SK-N-SH (cell line): ENCODE measurements at regions of chr12 and their contacts with region 1.

Region 1: DNA sequence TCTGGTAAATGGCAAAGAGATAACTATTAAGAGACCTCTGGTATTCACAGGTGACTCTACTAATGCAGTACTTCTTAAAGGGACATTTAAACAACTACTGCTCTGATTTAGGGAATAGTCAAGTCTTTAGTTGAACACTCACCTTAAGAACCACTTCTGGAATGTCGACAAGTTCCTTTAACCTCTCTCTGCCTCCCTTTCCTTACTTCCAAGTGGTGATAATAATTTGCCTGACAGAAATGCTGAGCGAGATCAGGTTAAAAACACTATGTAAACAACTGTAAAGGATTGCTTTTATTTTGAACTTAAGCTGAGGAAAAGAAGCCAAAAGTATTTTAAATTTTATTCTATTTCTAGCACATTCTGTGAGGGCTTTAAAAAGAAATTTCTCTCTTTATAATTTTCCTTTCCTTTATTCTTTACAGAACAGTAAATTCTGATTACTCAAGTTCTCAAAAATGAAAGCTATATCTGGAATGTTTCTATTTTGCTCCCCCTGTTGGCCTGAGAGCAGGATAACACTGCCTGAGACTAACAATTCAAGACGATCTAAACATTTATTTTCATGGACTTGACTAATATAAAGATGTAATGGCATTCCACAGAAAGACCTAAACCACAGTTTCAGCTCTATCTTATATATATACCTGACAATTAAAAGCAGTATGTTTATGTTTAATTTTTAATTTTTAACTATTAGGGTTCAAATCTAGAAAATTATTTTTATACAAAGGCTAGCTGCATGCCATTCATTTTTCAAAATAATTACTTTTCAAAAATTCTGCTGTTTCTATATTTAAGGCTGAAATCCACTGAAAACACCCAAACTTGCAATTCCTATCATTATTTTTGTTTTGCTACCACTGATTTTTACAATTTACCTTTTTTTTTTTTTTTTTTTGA is 29.2 kb downstream of the ZCCHC8 start:
- DNase-seq: peak; percentile 58
- H3K4me3 ChIP-seq: no peak overlapping the region; a peak in 1 of 4 replicates
- H3K27ac ChIP-seq: peak overlapping the region; percentile 44 to 71
- H3K4me1 ChIP-seq: peaks cover 0 to 4% of the 10 kb centered on the region in 2 experiments; a peak in 1 of 4 replicates
- H3K27me3 ChIP-seq: no peaks in the 10 kb centered on the region
- CTCF ChIP-seq: peak; percentile 90
- EP300 ChIP-seq: no peak
- RAD21 ChIP-seq: peak; percentile 75

Region 2: GRCh38 chr12:122382919-122383350 is 88.6 kb before region 1 on chr12:
- CTCF ChIA-PET with region 1: no interaction called
- POLR2A ChIA-PET with region 1: no interaction called
- DNase-seq: no peak
- H3K4me3 ChIP-seq: no peak overlapping the region
- H3K27ac ChIP-seq: no peak overlapping the region
- H3K4me1 ChIP-seq: peaks cover 0 to 2% of the 10 kb centered on the region in 2 experiments; a peak in 1 of 4 replicates
- H3K27me3 ChIP-seq: no peaks in the 10 kb centered on the region
- CTCF ChIP-seq: no peak
- EP300 ChIP-seq: no peak
- RAD21 ChIP-seq: no peak

Region 3: GRCh38 chr12:122399592-122400373 is 71.8 kb before region 1 on chr12:
- CTCF ChIA-PET with region 1: interaction called, 148 read pairs
- POLR2A ChIA-PET with region 1: interaction called, 3 read pairs
- DNase-seq: peak; percentile 66
- H3K4me3 ChIP-seq: peak overlapping the region in 1 of 2 experiments; percentile 42; a peak in 2 of 4 replicates
- H3K27ac ChIP-seq: peak overlapping the region; percentile 77 to 99
- H3K4me1 ChIP-seq: peaks cover 10 to 23% of the 10 kb centered on the region in 2 experiments
- H3K27me3 ChIP-seq: no peaks in the 10 kb centered on the region
- CTCF ChIP-seq: peak; percentile 79
- EP300 ChIP-seq: no peak
- RAD21 ChIP-seq: peak; percentile 89

Region 4: GRCh38 chr12:122449353-122449752 is 22.2 kb before region 1 on chr12:
- CTCF ChIA-PET with region 1: interaction called, 12 read pairs
- POLR2A ChIA-PET with region 1: no interaction called
- DNase-seq: no peak
- H3K4me3 ChIP-seq: no peak overlapping the region
- H3K27ac ChIP-seq: no peak overlapping the region; a peak in 1 of 4 replicates
- H3K4me1 ChIP-seq: no peaks in the 10 kb centered on the region
- H3K27me3 ChIP-seq: no peaks in the 10 kb centered on the region
- CTCF ChIP-seq: no peak
- EP300 ChIP-seq: no peak
- RAD21 ChIP-seq: no peak

Region 5: GRCh38 chr12:122481861-122482260 is 10.3 kb after region 1 on chr12:
- CTCF ChIA-PET with region 1: interaction called, 21 read pairs
- POLR2A ChIA-PET with region 1: no interaction called
- DNase-seq: no peak
- H3K4me3 ChIP-seq: no peak overlapping the region
- H3K27ac ChIP-seq: peak overlapping the region in 1 of 2 experiments; percentile 39; a peak in 2 of 4 replicates
- H3K4me1 ChIP-seq: 0 out of 4 replicates have a peak, but pooled peaks cover 0 to 3% of the 10 kb centered on the region in 2 experiments
- H3K27me3 ChIP-seq: no peaks in the 10 kb centered on the region
- CTCF ChIP-seq: no peak
- EP300 ChIP-seq: no peak
- RAD21 ChIP-seq: no peak

Region 6: DNA sequence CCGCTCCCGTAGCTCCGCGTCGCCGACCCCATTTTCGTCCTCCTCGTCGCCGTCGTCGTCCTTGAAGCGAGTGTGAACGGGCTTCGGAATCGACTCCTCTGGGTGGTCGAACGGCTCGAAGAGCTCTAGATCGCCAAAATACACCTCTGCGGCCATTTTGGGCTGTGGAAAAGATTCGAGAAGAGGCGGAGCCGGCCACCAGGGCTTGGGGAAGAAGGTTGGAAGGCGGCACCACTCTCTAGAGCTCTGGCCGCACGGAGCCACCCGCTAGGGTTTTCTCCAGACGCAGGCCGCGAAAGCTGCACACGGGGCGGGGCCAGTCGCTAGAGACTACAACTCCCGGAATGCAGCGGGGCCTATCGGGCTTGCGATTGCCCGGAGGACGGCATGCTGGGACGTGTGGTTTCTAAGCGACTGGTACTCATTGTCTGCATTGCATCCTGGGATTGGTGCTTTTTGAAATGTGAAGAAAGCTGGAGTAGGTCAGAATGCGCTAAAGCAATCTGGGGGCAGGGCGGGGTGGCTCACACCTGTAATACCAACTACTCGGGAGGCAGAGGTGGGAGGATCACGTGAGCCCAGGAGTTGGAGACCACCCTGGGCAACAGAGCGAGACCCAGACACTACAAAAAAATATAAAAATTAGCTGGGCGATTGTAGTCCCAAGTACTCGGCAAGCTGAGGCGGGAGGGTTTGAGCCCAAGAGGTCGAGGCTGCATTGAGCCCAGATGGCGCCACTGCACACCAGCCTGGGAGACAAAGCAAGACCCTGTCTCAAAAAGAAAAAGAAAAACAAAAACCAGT is 29.3 kb after region 1 on chr12 and contains the start of gene ZCCHC8:
- CTCF ChIA-PET with region 1: interaction called, 40 read pairs
- POLR2A ChIA-PET with region 1: interaction called, 3 read pairs
- DNase-seq: peak; percentile 92
- H3K4me3 ChIP-seq: peak within 1 kb of the TSS; percentile 63 to 88
- H3K27ac ChIP-seq: peak within 1 kb of the TSS; percentile 92 to 99
- H3K4me1 ChIP-seq: peaks cover 0 to 11% of the 10 kb centered on the region in 2 experiments; a peak in 2 of 4 replicates
- H3K27me3 ChIP-seq: no peaks in the 10 kb centered on the region
- CTCF ChIP-seq: no peak; the same call in 1 of the 2 replicates
- EP300 ChIP-seq: 0 out of 4 replicates have a peak, but pooled peaks of 1 of the 2 experiments have one; percentile 18
- RAD21 ChIP-seq: no peak
- polyA plus RNA-seq, gene ZCCHC8: 11.3 and 14.0 TPM in 2 replicates

Region 7: GRCh38 chr12:122517877-122518276 is 46.3 kb after region 1 on chr12:
- CTCF ChIA-PET with region 1: no interaction called
- POLR2A ChIA-PET with region 1: no interaction called
- DNase-seq: no peak
- H3K4me3 ChIP-seq: no peak overlapping the region
- H3K27ac ChIP-seq: peak overlapping the region in 1 of 2 experiments; percentile 44; a peak in 2 of 4 replicates
- H3K4me1 ChIP-seq: peaks cover 0 to 5% of the 10 kb centered on the region in 2 experiments; a peak in 2 of 4 replicates
- H3K27me3 ChIP-seq: no peaks in the 10 kb centered on the region
- CTCF ChIP-seq: no peak
- EP300 ChIP-seq: no peak
- RAD21 ChIP-seq: no peak

Region 8: DNA sequence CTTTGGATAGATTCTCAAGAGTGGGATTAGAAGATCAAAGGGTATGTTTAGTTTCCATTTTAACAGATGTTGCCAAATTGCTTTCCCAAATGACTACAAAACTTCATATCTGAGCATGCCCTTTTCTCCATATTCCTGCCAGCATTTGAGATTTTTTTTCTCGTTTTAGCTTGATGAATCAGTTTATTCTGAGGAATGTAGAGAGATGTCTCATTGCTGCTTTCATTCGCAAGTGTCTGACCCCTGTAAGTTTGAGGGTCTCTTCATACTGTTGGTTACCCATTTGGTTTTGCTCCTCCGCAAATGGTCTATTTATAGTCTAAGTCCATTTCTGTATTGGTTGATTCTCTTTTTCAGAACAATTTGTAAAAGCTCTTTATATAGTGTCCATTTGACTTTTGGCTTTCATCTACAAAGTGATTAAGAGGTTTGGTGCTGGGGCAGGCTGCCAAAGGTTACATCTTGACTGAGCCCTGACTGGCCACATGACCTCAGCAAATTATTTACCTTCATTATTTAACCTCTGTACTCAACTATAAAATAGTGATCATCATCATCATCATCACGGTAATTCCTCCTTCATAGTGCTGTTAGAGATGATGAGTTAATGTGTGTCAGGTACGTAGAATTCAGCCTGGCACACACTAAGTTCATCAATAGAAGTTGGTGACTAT is 198.0 kb after region 1 on chr12:
- CTCF ChIA-PET with region 1: no interaction called
- POLR2A ChIA-PET with region 1: no interaction called
- DNase-seq: no peak
- H3K4me3 ChIP-seq: no peak overlapping the region
- H3K27ac ChIP-seq: peak overlapping the region in 1 of 2 experiments; percentile 71; a peak in 2 of 4 replicates
- H3K4me1 ChIP-seq: peaks cover 0 to 5% of the 10 kb centered on the region in 2 experiments; a peak in 1 of 4 replicates
- H3K27me3 ChIP-seq: no peaks in the 10 kb centered on the region
- CTCF ChIP-seq: no peak
- EP300 ChIP-seq: no peak
- RAD21 ChIP-seq: no peak

Region 9: GRCh38 chr12:122974274-122974891 is 502.8 kb after region 1 on chr12:
- CTCF ChIA-PET with region 1: no interaction called
- POLR2A ChIA-PET with region 1: no interaction called
- DNase-seq: peak; percentile 93
- H3K4me3 ChIP-seq: peak overlapping the region; percentile 95 to 99
- H3K27ac ChIP-seq: peak overlapping the region; percentile 99
- H3K4me1 ChIP-seq: peaks cover 4 to 22% of the 10 kb centered on the region in 2 experiments; a peak in 2 of 4 replicates
- H3K27me3 ChIP-seq: no peaks in the 10 kb centered on the region
- CTCF ChIP-seq: no peak
- EP300 ChIP-seq: 0 out of 4 replicates have a peak, but pooled peaks of 1 of the 2 experiments have one; percentile 4
- RAD21 ChIP-seq: no peak